GM12878 (cell line): ENCODE measurements at regions of chr1 and their contacts with region 1.

Region 1: DNA sequence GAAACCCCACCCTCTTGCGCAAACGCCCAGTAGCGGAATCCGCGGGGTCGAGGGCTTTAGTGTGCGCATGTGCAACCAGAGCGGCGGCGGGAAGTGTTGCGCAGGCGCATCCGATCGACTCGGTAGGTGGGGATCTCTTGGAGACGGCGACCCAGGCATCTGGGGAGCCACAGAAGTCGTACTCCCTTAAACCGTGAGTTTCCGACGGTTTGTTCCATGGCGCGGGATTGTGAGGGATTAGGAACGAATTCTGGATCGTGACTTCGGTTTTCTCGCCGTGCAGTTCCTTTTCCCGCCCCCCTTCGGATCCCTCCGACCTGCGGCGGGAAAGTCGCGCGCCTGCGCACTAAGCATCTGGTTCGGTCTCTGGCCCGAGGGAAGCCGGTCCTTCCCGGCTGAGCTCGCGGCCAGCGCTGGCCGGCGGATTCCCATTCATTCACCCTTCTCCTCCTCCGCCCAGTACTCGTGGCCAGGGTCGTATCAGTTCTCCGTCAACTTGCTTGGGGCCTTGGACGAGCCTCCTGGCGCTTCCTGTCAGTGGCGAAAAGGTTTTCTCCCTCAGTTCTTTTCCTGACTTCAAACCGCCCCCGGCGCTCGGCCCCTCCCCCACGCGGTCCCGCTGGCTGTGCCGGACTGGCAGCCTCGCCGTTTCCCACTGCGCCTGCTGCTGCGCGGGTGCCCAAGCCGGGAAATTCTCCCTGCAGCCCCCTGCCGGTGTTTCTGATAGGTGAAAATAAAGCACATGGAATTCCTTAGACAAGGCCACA is at the start of gene CDC7:
- DNase-seq: peak; percentile 77
- ATAC-seq: peak; percentile 82
- H3K4me3 ChIP-seq: peak within 1 kb of the TSS; percentile 92
- H3K27ac ChIP-seq: peak within 1 kb of the TSS; percentile 96
- H3K4me1 ChIP-seq: peaks cover 2% of the 10 kb centered on the region; the same call in 1 of the 2 replicates
- H3K27me3 ChIP-seq: no peaks in the 10 kb centered on the region
- CTCF ChIP-seq: peak in 1 of 3 experiments; percentile 14; a peak in 2 of 6 replicates
- EP300 ChIP-seq: no peak
- POLR2A ChIP-seq: peak; percentile 81
- RAD21 ChIP-seq: no peak
- polyA plus RNA-seq, gene CDC7: 14.9 to 20.5 TPM

Region 2: GRCh38 chr1:91282695-91283420 is 218.1 kb before region 1 on chr1:
- CTCF ChIA-PET with region 1: interaction called, 6 read pairs
- POLR2A ChIA-PET with region 1: no interaction called
- RAD21 ChIA-PET with region 1: interaction called, 4 read pairs
- SMC1A ChIA-PET with region 1: no interaction called
- in situ Hi-C with region 1: no loop called
- intact Hi-C with region 1: loop called (anchors 2 kb)
- DNase-seq: peak; percentile 9
- ATAC-seq: peak; percentile 76
- H3K4me3 ChIP-seq: no peak overlapping the region
- H3K27ac ChIP-seq: no peak overlapping the region
- H3K4me1 ChIP-seq: no peaks in the 10 kb centered on the region
- H3K27me3 ChIP-seq: no peaks in the 10 kb centered on the region
- CTCF ChIP-seq: peak; percentile 71 to 75 (median 71)
- EP300 ChIP-seq: no peak
- POLR2A ChIP-seq: no peak
- RAD21 ChIP-seq: peak; percentile 84

Region 3: DNA sequence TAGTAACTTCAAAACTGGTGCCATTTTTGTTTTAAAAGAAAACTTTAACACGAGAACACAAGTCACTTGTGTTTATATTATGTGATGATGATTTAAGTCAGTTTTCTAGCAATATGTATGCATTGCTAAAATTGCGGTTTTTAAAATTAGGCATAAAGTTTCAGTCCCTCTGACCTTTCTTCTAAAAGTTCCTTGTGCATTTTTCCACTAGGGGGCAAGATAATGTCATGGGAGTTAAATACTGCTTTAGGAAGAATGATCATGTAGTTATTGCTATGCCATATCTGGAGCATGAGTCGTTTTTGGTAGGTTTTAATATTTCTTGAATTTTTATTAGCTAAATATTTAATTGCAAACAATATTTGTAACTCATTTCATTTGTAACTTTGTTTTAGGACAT is 10.4 kb after region 1 on chr1:
- CTCF ChIA-PET with region 1: interaction called, 59 read pairs
- POLR2A ChIA-PET with region 1: interaction called, 3 read pairs
- RAD21 ChIA-PET with region 1: interaction called, 27 read pairs
- SMC1A ChIA-PET with region 1: interaction called, 10 read pairs
- in situ Hi-C with region 1: no loop called
- intact Hi-C with region 1: no loop called
- DNase-seq: no peak
- ATAC-seq: peak; percentile 59
- H3K4me3 ChIP-seq: no peak overlapping the region
- H3K27ac ChIP-seq: no peak overlapping the region
- H3K4me1 ChIP-seq: no peaks in the 10 kb centered on the region
- H3K27me3 ChIP-seq: no peaks in the 10 kb centered on the region
- CTCF ChIP-seq: peak; percentile 44 to 64 (median 59); a peak in 5 of 6 replicates
- EP300 ChIP-seq: no peak
- POLR2A ChIP-seq: no peak
- RAD21 ChIP-seq: peak; percentile 80

Region 4: GRCh38 chr1:91803847-91804545 is 303.1 kb after region 1 on chr1:
- CTCF ChIA-PET with region 1: no interaction called
- POLR2A ChIA-PET with region 1: no interaction called
- RAD21 ChIA-PET with region 1: no interaction called
- SMC1A ChIA-PET with region 1: no interaction called
- in situ Hi-C with region 1: no loop called
- intact Hi-C with region 1: loop called (anchors 10 kb)
- DNase-seq: peak; percentile 95
- ATAC-seq: peak; percentile 87
- H3K4me3 ChIP-seq: no peak overlapping the region
- H3K27ac ChIP-seq: peak overlapping the region; percentile 81
- H3K4me1 ChIP-seq: peaks cover 29% of the 10 kb centered on the region
- H3K27me3 ChIP-seq: no peaks in the 10 kb centered on the region
- CTCF ChIP-seq: no peak
- EP300 ChIP-seq: peak in 1 of 2 experiments; percentile 26; a peak in 2 of 4 replicates
- POLR2A ChIP-seq: peak; percentile 51
- RAD21 ChIP-seq: no peak

Region 5: GRCh38 chr1:92298573-92299476 is 797.9 kb after region 1 on chr1 and contains the starts of genes GLMN and RPAP2:
- CTCF ChIA-PET with region 1: no interaction called
- POLR2A ChIA-PET with region 1: interaction called, 3 read pairs
- RAD21 ChIA-PET with region 1: no interaction called
- SMC1A ChIA-PET with region 1: interaction called, 3 read pairs
- in situ Hi-C with region 1: no loop called
- intact Hi-C with region 1: loop called (anchors 10 kb)
- DNase-seq: peak; percentile 45
- ATAC-seq: peak; percentile 97
- H3K4me3 ChIP-seq: peak within 1 kb of the TSS; percentile 99
- H3K27ac ChIP-seq: peak within 1 kb of the TSS; percentile 93
- H3K4me1 ChIP-seq: no peaks in the 10 kb centered on the region
- H3K27me3 ChIP-seq: no peaks in the 10 kb centered on the region
- CTCF ChIP-seq: 0 out of 6 replicates have a peak, but pooled peaks of 1 of the 3 experiments have one; percentile 13
- EP300 ChIP-seq: no peak
- POLR2A ChIP-seq: peak; percentile 99
- RAD21 ChIP-seq: no peak
- polyA plus RNA-seq, gene GLMN: 18.2 to 20.6 TPM
- polyA plus RNA-seq, gene RPAP2: 20.2 to 24.0 TPM